Naive thymus-derived CD4-positive, alpha-beta T cell (primary cell): ENCODE measurements at regions of chr5 and their contacts with region 1.

Region 1: DNA sequence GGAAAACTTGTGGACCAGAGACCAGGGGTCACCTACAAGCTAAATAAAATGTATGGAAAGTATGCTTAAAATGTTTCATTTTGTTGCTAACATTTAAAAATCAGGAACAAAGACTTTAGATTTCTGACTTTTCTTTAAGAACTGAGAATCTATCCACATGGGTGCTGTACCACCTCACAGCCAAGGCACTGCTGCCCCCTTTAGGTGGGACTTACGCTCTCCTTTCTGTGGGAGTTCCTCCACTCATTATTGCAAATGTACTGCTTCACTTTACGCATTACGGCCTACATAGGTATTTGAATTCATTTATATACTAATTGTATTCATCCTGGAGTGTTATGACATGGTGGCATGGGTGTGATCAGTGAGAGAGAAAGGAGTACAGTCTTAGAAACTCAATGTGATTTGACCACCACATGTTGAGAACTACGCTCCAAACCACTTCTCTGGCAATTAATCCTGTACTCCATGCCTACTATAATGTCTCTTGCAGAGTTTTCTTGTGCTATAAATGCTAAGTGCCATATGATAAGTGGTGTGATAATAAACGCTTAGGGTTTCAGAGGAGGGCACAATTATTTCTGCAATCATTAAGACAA is 24.7 kb upstream of the CETN3 start:
- DNase-seq: peak in 7 of 9 donors; percentile 11 to 45 (median 41)
- ATAC-seq: peak; percentile 69
- H3K4me3 ChIP-seq: no peak overlapping the region
- H3K4me3 Mint-ChIP-seq: no peak overlapping the region
- H3K27ac ChIP-seq: no peak overlapping the region
- H3K27ac Mint-ChIP-seq: no peak overlapping the region
- H3K4me1 ChIP-seq: no peaks in the 10 kb centered on the region
- H3K4me1 Mint-ChIP-seq: no peaks in the 10 kb centered on the region
- H3K27me3 ChIP-seq: no peaks in the 10 kb centered on the region
- H3K27me3 Mint-ChIP-seq: peaks cover 0 to 40% (median 5%) of the 10 kb centered on the region in 5 donors

Region 2: DNA sequence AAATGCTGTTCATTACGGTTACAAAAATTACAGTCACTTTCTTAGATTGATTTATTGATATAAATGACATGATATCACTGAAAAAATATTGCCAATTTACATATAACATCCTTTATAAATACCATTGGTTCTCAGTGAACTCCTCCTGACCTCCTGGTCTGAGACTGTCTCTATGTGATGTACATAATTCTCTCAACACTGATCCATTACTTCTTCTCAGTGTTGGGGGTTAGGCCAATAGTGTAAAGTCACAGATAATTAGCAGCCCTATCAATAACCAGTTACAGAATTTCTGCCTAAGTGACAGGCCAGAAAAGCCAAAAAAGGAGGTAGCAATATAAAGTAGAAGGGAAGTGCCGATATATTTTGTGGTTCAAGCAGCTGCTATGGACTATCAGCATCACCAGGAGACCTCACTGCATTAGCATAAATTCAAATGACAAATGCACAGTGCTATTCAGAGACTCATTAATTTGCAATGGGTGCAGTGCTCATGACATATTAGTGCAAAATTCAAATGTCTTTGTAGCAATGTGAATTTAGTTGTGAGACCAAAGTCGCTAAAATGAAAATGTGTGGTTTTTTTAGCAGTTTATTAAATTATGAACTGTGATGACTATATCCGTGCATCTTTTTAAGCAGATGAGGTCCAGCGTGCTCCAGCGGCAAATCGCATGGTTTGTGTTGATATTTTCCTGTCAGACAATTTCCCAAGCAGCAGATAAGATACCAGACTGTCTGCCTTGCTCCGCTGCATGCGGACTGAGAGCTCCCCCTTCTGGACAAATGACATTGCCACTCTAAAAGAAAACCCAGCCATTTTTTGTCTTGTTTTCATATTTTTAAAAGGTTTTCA is 169.3 kb before region 1 on chr5:
- CTCF ChIA-PET with region 1: no interaction called
- POLR2A ChIA-PET with region 1: no interaction called
- intact Hi-C with region 1: loop called (anchors 2 to 5 kb)
- DNase-seq: peak; percentile 0 to 46 (median 30)
- ATAC-seq: peak; percentile 59
- H3K4me3 ChIP-seq: no peak overlapping the region
- H3K4me3 Mint-ChIP-seq: no peak overlapping the region
- H3K27ac ChIP-seq: no peak overlapping the region
- H3K27ac Mint-ChIP-seq: no peak overlapping the region
- H3K4me1 ChIP-seq: no peaks in the 10 kb centered on the region
- H3K4me1 Mint-ChIP-seq: peaks cover 0 to 3% (median 0%) of the 10 kb centered on the region in 7 donors
- H3K27me3 ChIP-seq: no peaks in the 10 kb centered on the region
- H3K27me3 Mint-ChIP-seq: peaks cover 0 to 4% (median 0%) of the 10 kb centered on the region in 5 donors

Region 3: GRCh38 chr5:90368454-90369246 is 65.6 kb before region 1 on chr5:
- CTCF ChIA-PET with region 1: no interaction called
- POLR2A ChIA-PET with region 1: no interaction called
- intact Hi-C with region 1: no loop called
- DNase-seq: no peak
- ATAC-seq: no peak
- H3K4me3 ChIP-seq: no peak overlapping the region
- H3K4me3 Mint-ChIP-seq: no peak overlapping the region
- H3K27ac ChIP-seq: no peak overlapping the region
- H3K27ac Mint-ChIP-seq: no peak overlapping the region
- H3K4me1 ChIP-seq: no peaks in the 10 kb centered on the region
- H3K4me1 Mint-ChIP-seq: no peaks in the 10 kb centered on the region
- H3K27me3 ChIP-seq: no peaks in the 10 kb centered on the region
- H3K27me3 Mint-ChIP-seq: peaks cover 6 to 31% (median 16%) of the 10 kb centered on the region in 5 donors

Region 4: DNA sequence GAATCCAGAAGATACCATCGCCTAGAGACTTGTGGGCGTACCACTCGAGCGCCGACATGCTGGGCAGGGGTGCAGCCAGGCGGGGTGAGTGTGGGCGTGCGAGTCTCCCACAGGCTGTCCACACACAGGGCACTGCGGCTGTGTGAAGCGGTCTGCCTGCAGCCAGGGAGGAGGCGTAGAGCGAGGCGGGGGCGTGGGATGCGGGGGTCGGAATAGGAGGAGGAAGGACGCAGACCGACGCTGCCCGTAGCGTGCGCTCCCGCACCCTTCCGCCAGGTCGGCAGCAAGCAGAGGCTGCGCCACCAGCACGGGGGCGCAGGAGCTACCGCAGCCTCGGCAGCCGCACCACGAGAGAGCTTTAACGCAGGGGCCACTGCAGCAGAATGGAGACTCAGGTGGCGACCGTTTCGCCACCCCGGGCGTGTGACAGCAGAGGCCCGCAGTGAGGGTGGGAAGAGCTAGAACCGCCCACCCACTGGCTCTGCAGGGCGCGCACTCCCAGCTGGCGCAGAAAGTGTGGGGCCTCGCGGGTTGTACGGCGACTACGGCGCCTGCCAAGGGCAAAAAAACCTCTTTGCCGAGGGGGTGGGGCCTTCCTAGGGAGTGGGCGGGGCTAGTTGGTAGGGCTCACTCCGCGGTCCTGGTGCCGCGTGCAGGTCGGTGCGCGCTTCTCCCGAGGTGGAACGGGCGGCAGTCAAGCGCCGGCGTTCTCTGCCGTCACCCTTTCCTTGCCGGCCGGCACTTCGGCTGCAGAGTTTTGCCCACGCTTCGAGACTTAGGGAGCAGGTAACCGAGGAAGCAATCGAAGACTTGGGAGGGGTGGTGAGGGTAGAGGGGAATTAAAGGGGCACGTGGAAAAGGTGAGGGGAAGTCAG is 40.3 kb after region 1 on chr5 and contains the starts of genes MBLAC2 and POLR3G:
- CTCF ChIA-PET with region 1: interaction called, 6 read pairs
- POLR2A ChIA-PET with region 1: interaction called, 9 read pairs
- intact Hi-C with region 1: loop called in 1 of 2 experiments (anchors 1 kb)
- DNase-seq: peak; percentile 80 to 93 (median 92)
- ATAC-seq: peak; percentile 95
- H3K4me3 ChIP-seq: peak within 1 kb of the TSS; percentile 95
- H3K4me3 Mint-ChIP-seq: peak within 1 kb of the TSS; percentile 90 to 99 (median 98)
- H3K27ac ChIP-seq: peak within 1 kb of the TSS; percentile 76
- H3K27ac Mint-ChIP-seq: peak within 1 kb of the TSS; percentile 86 to 98 (median 94)
- H3K4me1 ChIP-seq: peaks cover 15 to 16% of the 10 kb centered on the region in 2 donors
- H3K4me1 Mint-ChIP-seq: peaks cover 18 to 51% (median 43%) of the 10 kb centered on the region in 7 donors
- H3K27me3 ChIP-seq: no peaks in the 10 kb centered on the region
- H3K27me3 Mint-ChIP-seq: no peaks in the 10 kb centered on the region
- total RNA-seq, gene MBLAC2: 5.2 to 17.6 (median 7.1) TPM
- total RNA-seq, gene POLR3G: 0.51 to 3.0 (median 1.5) TPM

Region 5: DNA sequence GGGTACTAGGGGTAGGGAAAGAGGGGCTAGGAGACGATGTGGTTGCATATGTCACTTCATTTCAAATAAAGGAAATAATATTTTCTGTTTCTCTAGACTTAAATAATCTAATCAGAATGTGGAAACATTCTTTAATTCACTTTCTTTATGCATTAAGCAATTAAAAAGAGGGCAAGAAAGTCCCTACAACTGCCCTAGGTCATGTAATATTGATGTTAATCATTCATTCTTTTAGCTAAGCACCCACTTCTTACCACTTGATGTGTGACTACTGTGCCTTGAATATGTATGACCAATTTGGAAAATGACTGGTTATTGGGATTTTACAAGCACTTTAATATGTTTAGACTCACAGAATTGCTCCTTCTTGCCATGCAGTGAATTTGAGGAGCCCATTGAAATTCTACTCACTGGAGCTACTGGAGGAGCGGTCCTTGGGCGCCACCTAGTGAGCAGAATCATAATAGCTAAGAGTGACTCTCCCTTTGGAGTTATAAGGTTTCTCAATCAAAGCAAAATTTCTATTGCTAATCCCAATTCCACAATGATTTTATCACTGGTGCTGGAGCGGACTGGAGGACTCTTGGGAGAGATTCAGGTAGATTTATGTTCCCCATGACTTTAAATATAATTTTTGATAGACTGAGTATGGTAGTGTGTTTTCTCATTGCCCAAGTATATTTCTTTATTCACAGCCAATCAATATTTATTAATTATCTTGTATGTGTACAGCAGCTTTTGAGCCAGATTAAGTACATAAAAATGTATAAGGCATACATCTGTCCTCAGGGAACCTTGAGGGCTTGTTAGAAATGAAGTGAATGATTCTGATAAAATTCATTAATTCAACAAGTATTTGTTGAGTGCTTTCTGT is 349.5 kb after region 1 on chr5:
- CTCF ChIA-PET with region 1: interaction called, 7 read pairs
- POLR2A ChIA-PET with region 1: no interaction called
- intact Hi-C with region 1: loop called (anchors 1 kb)
- DNase-seq: peak; percentile 27 to 72 (median 59)
- ATAC-seq: peak; percentile 82
- H3K4me3 ChIP-seq: no peak overlapping the region
- H3K4me3 Mint-ChIP-seq: no peak overlapping the region
- H3K27ac ChIP-seq: no peak overlapping the region
- H3K27ac Mint-ChIP-seq: no peak overlapping the region
- H3K4me1 ChIP-seq: no peaks in the 10 kb centered on the region
- H3K4me1 Mint-ChIP-seq: peaks cover 0 to 2% (median 0%) of the 10 kb centered on the region in 7 donors
- H3K27me3 ChIP-seq: no peaks in the 10 kb centered on the region
- H3K27me3 Mint-ChIP-seq: peaks cover 11 to 23% (median 16%) of the 10 kb centered on the region in 5 donors